Common myeloid progenitor, CD34-positive (primary cell): ENCODE measurements at regions of chr1 and their contacts with region 1.

Region 1: DNA sequence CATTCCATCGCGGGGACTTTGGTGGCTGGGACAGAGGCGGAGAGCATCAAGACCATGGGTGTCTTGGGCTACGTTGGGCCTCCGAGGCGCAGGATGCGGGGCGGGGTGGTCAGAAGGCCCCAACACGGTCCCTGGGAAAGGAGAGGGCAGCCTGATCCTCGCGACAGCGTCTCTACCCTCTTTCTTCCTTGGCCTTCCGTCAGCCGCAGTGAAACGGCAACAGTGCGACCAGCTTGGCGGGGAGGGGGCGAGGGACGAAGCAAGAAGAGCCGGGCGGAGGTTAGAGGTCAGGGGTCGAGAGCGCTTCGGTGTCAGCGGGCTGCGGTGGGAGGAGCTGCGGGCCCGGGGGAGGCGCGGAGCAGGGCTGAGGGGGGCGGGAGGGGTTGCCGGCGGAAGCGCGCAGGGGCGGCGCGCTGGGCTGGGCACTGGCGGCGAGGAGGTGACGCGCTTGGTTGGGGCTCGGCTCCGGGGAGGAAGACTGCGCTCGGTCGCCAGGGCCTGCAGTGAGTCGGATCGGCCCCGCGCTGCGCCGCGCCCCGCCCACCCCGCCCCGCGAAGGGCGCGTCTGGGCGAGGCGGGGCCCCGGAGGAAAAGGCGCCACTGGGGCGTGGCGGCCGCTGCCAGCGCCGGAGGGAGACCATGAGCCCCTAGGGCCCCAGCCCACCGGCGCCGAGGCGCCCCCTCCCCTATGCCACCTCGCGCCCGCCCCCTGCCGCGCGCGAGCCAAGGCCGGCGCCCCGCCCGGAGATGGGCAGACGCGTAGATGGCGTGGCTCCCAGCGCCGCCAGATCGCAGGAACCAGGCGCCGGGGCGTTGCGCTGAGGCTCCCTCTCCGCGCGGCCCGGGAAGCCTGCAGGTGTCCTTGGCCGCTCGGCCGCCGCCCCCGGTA is at the start of gene KCNC4:
- DNase-seq: peak; percentile 89 to 94 (median 93)
- H3K4me3 ChIP-seq: peak within 1 kb of the TSS; percentile 55 to 79 (median 67)
- H3K27ac ChIP-seq: peak within 1 kb of the TSS in 1 of 2 experiments; percentile 77
- H3K4me1 ChIP-seq: peaks cover 0 to 31% (median 23%) of the 10 kb centered on the region in 4 experiments
- H3K27me3 ChIP-seq: peaks cover 0 to 21% (median 19%) of the 10 kb centered on the region in 5 experiments

Region 2: DNA sequence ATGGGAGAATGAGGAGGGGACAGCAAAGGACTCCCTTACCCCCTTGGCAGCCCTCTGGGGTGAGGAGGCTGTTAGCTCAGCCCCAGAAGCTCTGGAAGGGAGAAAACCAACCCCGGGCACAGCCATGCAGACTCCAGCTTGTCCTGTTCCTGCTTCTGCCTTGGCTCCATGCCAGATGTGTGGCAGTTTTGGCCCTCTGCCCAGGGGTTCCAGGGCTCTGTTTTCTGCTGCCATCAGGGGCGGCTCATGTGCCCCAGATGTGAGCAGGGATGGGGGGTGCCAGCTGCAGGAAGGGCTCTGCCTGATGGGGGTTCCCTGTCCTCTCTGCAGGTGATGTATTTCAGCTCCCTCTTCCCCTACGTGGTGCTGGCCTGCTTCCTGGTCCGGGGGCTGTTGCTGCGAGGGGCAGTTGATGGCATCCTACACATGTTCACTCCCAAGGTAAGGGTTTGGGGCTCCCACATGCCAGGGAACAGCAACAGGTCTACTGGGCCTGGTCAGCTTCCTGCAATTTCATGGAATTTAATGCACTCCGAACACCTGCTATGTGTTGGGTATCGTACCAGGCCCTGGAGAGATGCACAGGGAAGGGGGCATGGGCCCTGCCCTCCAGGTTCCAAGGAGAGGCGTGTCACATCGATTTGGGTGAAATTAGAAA is 33.5 kb before region 1 on chr1:
- CTCF ChIA-PET with region 1: no interaction called
- POLR2A ChIA-PET with region 1: no interaction called
- DNase-seq: peak; percentile 47 to 79 (median 78)
- H3K4me3 ChIP-seq: no peak overlapping the region
- H3K27ac ChIP-seq: no peak overlapping the region
- H3K4me1 ChIP-seq: peaks cover 0 to 10% (median 4%) of the 10 kb centered on the region in 4 experiments
- H3K27me3 ChIP-seq: peaks cover 0 to 7% (median 3%) of the 10 kb centered on the region in 5 experiments

Region 3: GRCh38 chr1:110190282-110190929 is 19.6 kb before region 1 on chr1:
- CTCF ChIA-PET with region 1: interaction called, 14 read pairs
- POLR2A ChIA-PET with region 1: no interaction called
- DNase-seq: peak in 1 of 3 donors; percentile 13
- H3K4me3 ChIP-seq: no peak overlapping the region
- H3K27ac ChIP-seq: no peak overlapping the region
- H3K4me1 ChIP-seq: no peaks in the 10 kb centered on the region
- H3K27me3 ChIP-seq: peaks cover 0 to 16% (median 2%) of the 10 kb centered on the region in 5 experiments

Region 4: GRCh38 chr1:110245876-110246620 is 36.1 kb after region 1 on chr1:
- CTCF ChIA-PET with region 1: interaction called, 23 read pairs
- POLR2A ChIA-PET with region 1: interaction called, 3 read pairs
- DNase-seq: no peak
- H3K4me3 ChIP-seq: no peak overlapping the region
- H3K27ac ChIP-seq: no peak overlapping the region
- H3K4me1 ChIP-seq: peaks cover 4 to 15% (median 12%) of the 10 kb centered on the region in 4 experiments
- H3K27me3 ChIP-seq: peaks cover 0 to 1% (median 0%) of the 10 kb centered on the region in 5 experiments

Region 5: DNA sequence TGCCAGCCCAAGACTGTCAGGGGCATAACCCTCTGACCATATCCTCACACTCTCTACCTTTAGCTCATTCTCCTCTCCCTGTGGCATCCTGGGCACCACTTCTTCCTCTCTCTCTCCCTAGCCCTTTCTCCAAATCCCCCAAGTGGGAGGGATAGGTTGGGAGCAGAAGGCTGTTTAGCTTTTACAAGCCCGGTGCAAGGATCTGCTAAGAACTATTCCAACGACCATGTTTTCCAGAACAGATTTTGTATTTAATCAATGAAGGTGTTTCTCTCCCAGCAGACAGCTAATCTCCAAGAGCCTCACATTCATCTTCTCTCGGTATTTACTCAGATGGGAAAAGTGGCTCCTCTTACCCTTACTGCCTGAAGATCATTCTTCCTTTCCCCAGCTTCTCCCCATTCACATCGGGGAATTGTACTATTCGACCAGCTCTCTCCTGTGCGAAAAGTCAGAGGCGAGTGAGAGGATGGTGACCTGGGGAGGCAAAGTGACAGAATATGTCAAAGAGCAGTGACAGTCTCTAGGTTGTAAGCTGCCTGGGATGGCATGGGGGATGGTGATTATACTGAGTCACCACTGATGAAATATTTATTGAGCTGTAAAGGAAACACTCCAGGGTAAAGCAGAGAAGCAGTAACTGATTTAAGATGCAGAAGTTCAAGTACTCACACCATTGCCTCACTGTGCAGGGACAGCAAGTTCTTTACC is 82.2 kb after region 1 on chr1:
- CTCF ChIA-PET with region 1: interaction called, 13 read pairs
- POLR2A ChIA-PET with region 1: no interaction called
- DNase-seq: peak in 2 of 3 donors; percentile 6
- H3K4me3 ChIP-seq: no peak overlapping the region
- H3K27ac ChIP-seq: no peak overlapping the region
- H3K4me1 ChIP-seq: no peaks in the 10 kb centered on the region
- H3K27me3 ChIP-seq: no peaks in the 10 kb centered on the region

Region 6: GRCh38 chr1:110338886-110339406 is 129.0 kb after region 1 on chr1 and contains the start of gene RBM15:
- CTCF ChIA-PET with region 1: interaction called, 40 read pairs
- POLR2A ChIA-PET with region 1: interaction called, 3 read pairs
- DNase-seq: peak; percentile 100
- H3K4me3 ChIP-seq: peak within 1 kb of the TSS; percentile 81 to 100 (median 99)
- H3K27ac ChIP-seq: peak within 1 kb of the TSS; percentile 99
- H3K4me1 ChIP-seq: peaks cover 15 to 62% (median 45%) of the 10 kb centered on the region in 4 experiments
- H3K27me3 ChIP-seq: no peaks in the 10 kb centered on the region

Region 7: GRCh38 chr1:110412576-110412975 is 202.6 kb after region 1 on chr1:
- CTCF ChIA-PET with region 1: interaction called, 19 read pairs
- POLR2A ChIA-PET with region 1: no interaction called
- DNase-seq: peak; percentile 80 to 90 (median 84)
- H3K4me3 ChIP-seq: no peak overlapping the region
- H3K27ac ChIP-seq: no peak overlapping the region
- H3K4me1 ChIP-seq: peaks cover 2 to 18% (median 11%) of the 10 kb centered on the region in 4 experiments
- H3K27me3 ChIP-seq: no peaks in the 10 kb centered on the region

Region 8: GRCh38 chr1:110495926-110496600 is 286.1 kb after region 1 on chr1:
- CTCF ChIA-PET with region 1: interaction called, 52 read pairs
- POLR2A ChIA-PET with region 1: interaction called, 5 read pairs
- DNase-seq: peak; percentile 81 to 90 (median 85)
- H3K4me3 ChIP-seq: no peak overlapping the region
- H3K27ac ChIP-seq: no peak overlapping the region
- H3K4me1 ChIP-seq: peaks cover 3 to 28% (median 23%) of the 10 kb centered on the region in 4 experiments
- H3K27me3 ChIP-seq: no peaks in the 10 kb centered on the region